Activated CD4-positive, alpha-beta T cell treated with anti-CD3 and anti-CD28 coated beads, Interleukin-2, amount 10 ng/mL, durations not matched to agents 24 days and 14 days (primary cell): ENCODE measurements at regions of chr9 and their contacts with region 1.

Region 1: DNA sequence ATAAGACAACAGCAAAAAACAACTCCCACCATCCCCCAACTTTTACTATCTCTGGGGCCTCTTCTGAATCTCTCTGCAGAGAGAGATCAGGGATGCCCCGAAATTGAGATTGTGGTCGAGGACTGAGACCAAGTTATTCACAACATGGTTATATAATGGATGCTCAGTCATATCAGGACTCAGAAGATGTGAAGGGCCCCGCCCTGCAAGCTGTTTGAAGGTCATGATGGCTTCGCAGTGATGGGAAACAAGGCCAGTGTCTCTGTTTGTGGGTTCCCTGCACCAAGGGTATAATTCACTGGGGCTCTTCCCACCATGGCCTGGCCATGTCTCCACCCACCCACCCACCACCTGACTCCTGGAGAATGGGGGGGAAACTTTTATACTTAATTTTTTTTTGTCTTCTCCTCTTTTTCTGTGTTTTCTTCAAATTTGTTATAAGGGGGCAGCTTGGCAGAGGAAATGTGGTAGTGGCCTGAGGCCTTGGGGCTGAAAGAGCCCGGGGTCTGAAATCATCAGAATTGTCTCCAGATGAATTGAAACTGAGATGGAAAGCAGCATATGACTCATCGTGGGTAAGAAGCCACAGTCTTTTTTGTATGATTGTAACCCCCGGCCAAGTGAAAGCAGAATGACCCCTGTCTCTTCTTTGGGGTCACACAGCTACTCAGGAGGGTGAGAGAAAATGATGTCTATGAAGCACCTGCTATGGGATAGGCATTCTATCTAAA is 15.0 kb upstream of the TEX48 start:
- DNase-seq: peak; percentile 92
- H3K4me3 Mint-ChIP-seq: peak overlapping the region; percentile 79
- H3K27ac Mint-ChIP-seq: peak overlapping the region; percentile 100
- H3K4me1 Mint-ChIP-seq: peaks cover 79% of the 10 kb centered on the region
- H3K27me3 Mint-ChIP-seq: no peaks in the 10 kb centered on the region

Region 2: GRCh38 chr9:114709636-114710035 is 12.7 kb after region 1 on chr9:
- intact Hi-C with region 1: loop called (anchors 1 kb)
- DNase-seq: no peak
- H3K4me3 Mint-ChIP-seq: peak overlapping the region; percentile 42
- H3K27ac Mint-ChIP-seq: peak overlapping the region; percentile 90
- H3K4me1 Mint-ChIP-seq: peaks cover 63% of the 10 kb centered on the region
- H3K27me3 Mint-ChIP-seq: no peaks in the 10 kb centered on the region

Region 3: GRCh38 chr9:114718801-114719221 is 21.8 kb after region 1 on chr9:
- intact Hi-C with region 1: loop called (anchors 1 kb)
- DNase-seq: peak; percentile 98
- H3K4me3 Mint-ChIP-seq: peak overlapping the region; percentile 74
- H3K27ac Mint-ChIP-seq: peak overlapping the region; percentile 97
- H3K4me1 Mint-ChIP-seq: peaks cover 81% of the 10 kb centered on the region
- H3K27me3 Mint-ChIP-seq: no peaks in the 10 kb centered on the region